ENCODE measurements at regions of chr19 and their contacts with region 1.

Region 1: DNA sequence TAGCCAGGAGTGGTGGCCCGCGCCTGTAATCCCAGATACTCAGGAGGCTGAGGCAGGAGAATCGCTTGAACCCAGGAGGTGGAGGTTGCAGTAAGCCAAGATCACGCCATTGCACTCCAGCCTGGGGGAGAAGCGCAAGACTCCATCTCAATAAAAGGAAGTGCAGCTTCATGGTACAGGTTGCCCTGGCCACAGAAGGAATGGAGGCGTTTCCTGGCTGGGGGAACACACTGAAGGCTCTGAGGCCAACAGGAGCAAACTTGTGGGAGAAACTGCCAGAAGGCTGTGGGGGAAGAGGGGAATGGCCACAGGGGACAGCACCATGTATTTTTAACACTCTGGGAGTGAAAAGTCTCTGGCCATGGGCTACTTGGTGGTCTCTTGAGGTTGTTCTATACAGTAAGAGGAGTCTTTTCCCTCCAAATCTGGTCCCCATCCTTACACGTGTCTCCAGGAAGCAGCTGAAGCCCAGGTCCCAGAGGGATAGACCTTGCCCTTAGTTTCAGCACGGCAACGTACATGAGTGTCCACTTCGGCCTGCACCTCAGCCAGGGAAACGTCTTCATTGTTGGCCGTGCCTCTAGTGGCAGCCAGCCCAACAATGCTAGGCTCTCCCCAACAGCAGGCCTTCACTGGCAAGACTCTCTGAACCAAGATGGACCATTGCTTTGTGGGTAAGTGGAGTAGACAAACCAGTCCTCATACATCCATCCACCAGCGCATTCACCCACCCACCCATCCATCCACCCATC is 7.4 kb downstream of the MICOS13 start:
- DNase-seq: no peak
- ATAC-seq: no peak
- H3K4me3 ChIP-seq: no peak overlapping the region
- H3K27ac ChIP-seq: no peak overlapping the region
- H3K4me1 ChIP-seq: no peaks in the 10 kb centered on the region
- H3K27me3 ChIP-seq: no peaks in the 10 kb centered on the region
- CTCF ChIP-seq: no peak
- POLR2A ChIP-seq: no peak

Region 2: DNA sequence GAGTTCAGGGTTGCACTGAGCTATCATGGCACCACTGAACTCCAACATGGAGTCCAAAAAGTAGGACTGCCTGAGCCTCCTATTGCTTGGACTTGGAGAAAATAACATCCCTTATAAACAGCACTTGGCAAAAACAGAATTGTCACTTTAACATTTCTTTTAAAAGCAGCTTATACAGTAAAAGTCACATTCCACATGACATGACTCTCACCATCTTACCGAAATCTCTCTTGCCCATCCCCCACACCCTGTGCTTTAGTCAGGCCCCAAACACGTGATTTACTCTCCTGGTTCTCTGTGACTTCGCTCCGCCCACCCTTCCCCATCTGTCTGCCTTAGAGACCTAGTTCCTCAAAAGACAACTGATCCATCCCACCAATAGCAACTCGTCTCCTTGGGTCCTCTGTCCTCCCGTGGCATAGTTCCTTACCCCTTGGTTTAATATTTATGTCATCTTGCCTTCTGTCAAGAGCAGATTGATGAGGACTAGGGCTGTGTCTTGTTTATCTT is 45.4 kb before region 1 on chr19:
- intact Hi-C with region 1: loop called in 1 of 2 experiments (anchors 5 kb)
- DNase-seq: peak in 1 of 3 donors; percentile 55
- ATAC-seq: no peak
- H3K4me3 ChIP-seq: no peak overlapping the region
- H3K27ac ChIP-seq: no peak overlapping the region
- H3K4me1 ChIP-seq: peaks cover 0 to 65% (median 23%) of the 10 kb centered on the region in 4 donors
- H3K27me3 ChIP-seq: no peaks in the 10 kb centered on the region
- CTCF ChIP-seq: no peak
- POLR2A ChIP-seq: no peak

Measured in right lobe of liver (tissue), 6 donors.